Activated B cell treated with CpG ODN at 0.5 μM for 24 hours (primary cell): ENCODE measurements at regions of chr10 and their contacts with region 1.

Region 1: GRCh38 chr10:114652402-114653368 is 5.4 kb downstream of the ABLIM1 start:
- DNase-seq: no peak
- ATAC-seq: no peak
- H3K4me3 Mint-ChIP-seq: no peak overlapping the region
- H3K27ac Mint-ChIP-seq: no peak overlapping the region
- H3K4me1 Mint-ChIP-seq: no peaks in the 10 kb centered on the region
- H3K27me3 Mint-ChIP-seq: no peaks in the 10 kb centered on the region
- CTCF ChIP-seq: no peak

Region 2: DNA sequence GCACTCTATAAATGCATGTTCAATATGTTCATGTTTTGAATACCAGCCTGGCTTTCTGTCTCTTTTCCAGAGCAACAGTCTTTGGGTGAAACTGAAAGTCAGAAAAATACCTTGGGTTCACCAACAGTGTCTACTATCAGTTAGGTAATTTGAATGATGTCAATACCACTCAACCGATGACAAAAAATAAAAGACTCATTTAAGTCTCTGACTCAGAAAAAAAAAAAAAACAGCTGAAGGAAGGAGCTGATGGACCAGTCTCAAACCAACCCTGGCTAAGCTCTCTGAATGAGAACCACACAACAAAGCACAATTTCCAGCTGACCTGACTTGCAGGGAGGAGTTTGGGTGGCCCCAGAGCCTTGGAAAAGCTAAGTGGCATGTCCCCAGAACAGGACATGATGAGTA is 37.1 kb before region 1 on chr10:
- CTCF ChIA-PET with region 1: no interaction called
- POLR2A ChIA-PET with region 1: no interaction called
- intact Hi-C with region 1: no loop called
- DNase-seq: no peak
- ATAC-seq: peak; percentile 58
- H3K4me3 Mint-ChIP-seq: peak overlapping the region; percentile 26
- H3K27ac Mint-ChIP-seq: peak overlapping the region; percentile 18
- H3K4me1 Mint-ChIP-seq: peaks cover 8% of the 10 kb centered on the region
- H3K27me3 Mint-ChIP-seq: no peaks in the 10 kb centered on the region
- CTCF ChIP-seq: no peak

Region 3: GRCh38 chr10:114631666-114632417 is 20.8 kb before region 1 on chr10:
- CTCF ChIA-PET with region 1: no interaction called
- POLR2A ChIA-PET with region 1: interaction called, 16 read pairs
- intact Hi-C with region 1: no loop called
- DNase-seq: peak; percentile 20
- ATAC-seq: peak; percentile 66
- H3K4me3 Mint-ChIP-seq: peak overlapping the region; percentile 74
- H3K27ac Mint-ChIP-seq: peak overlapping the region; percentile 14
- H3K4me1 Mint-ChIP-seq: peaks cover 24% of the 10 kb centered on the region
- H3K27me3 Mint-ChIP-seq: peaks cover 50% of the 10 kb centered on the region
- CTCF ChIP-seq: no peak